Heart right ventricle (tissue), 16 donors: ENCODE measurements at regions of chr19 and their contacts with region 1.

Region 1: GRCh38 chr19:3429581-3430080 is 50.7 kb downstream of the SMIM24 start:
- DNase-seq: peak; percentile 90
- ATAC-seq: peak; percentile 63 to 89 (median 82)
- H3K4me3 ChIP-seq: peak overlapping the region in 1 of 10 donors; percentile 23
- H3K27ac ChIP-seq: peak overlapping the region; percentile 66 to 93 (median 82)
- H3K4me1 ChIP-seq: peaks cover 10 to 67% (median 36%) of the 10 kb centered on the region in 9 donors
- H3K27me3 ChIP-seq: no peaks in the 10 kb centered on the region
- CTCF ChIP-seq: peak; percentile 99 to 100 (median 99)

Region 2: GRCh38 chr19:3343619-3344502 is 85.8 kb before region 1 on chr19:
- intact Hi-C with region 1: loop called in 4 of 10 experiments (anchors 5 kb)
- DNase-seq: peak; percentile 76 to 77
- ATAC-seq: peak; percentile 69 to 86 (median 79)
- H3K4me3 ChIP-seq: peak overlapping the region in 7 of 10 donors; percentile 17 to 41 (median 35)
- H3K27ac ChIP-seq: peak overlapping the region; percentile 52 to 82 (median 70)
- H3K4me1 ChIP-seq: peaks cover 11 to 33% (median 27%) of the 10 kb centered on the region in 9 donors
- H3K27me3 ChIP-seq: no peaks in the 10 kb centered on the region
- CTCF ChIP-seq: peak in 5 of 9 donors; percentile 2 to 36 (median 10)

Region 3: DNA sequence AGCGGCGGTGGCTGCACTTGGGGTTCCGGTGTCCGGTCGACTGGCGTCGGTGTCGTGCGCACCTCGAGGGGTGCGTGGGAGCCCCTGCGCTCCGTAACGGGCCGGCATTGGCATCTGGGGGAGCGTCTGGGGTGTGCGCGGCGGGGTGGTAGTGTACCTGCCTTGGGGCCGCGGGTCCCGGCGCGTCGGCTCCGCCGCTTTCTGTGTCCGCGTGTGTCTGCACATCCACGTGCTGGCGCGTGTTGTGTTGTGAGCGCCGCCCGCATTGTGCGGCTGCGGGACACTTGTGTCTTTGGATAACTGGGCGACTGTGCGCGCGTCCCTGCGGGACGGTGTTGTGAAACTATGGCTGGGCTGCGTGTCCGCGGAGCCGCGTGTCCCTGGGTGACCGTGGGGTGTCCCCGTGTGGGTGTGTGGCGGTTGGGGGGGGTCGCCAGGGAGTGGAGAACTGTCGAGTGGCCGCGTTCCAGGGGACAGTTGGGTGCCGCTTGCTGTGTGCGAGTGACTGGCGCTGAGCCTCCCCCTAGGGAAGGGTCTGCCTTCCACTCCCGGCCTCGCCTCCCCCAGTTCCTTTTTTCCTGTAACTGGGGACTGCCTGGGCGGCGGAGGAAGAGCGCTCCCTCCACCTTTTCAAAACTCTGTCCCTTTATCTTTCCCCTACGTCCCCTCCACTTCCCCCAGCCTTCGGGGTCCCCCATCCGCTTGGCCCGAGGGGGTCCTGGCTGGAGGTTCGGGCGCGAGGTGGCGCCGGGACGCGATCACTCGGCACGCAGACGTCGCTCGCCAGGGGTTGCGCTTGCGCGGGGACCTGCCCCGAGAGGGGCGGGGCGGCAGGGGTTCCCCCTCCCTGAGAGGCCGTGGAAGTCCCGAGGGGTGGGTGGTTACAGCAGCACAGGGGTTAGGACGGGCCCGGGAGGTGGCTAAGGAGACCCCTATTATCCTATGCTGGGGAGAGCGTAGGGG is 68.9 kb before region 1 on chr19:
- intact Hi-C with region 1: loop called in 2 of 10 experiments (anchors 5 to 10 kb)
- DNase-seq: peak; percentile 81 to 84
- ATAC-seq: peak; percentile 56 to 82 (median 72)
- H3K4me3 ChIP-seq: peak overlapping the region; percentile 40 to 100 (median 82)
- H3K27ac ChIP-seq: peak overlapping the region; percentile 88 to 100 (median 96)
- H3K4me1 ChIP-seq: peaks cover 17 to 60% (median 43%) of the 10 kb centered on the region in 9 donors
- H3K27me3 ChIP-seq: peaks cover 0 to 10% (median 0%) of the 10 kb centered on the region in 7 donors
- CTCF ChIP-seq: peak in 5 of 9 donors; percentile 22 to 55 (median 48)

Region 4: DNA sequence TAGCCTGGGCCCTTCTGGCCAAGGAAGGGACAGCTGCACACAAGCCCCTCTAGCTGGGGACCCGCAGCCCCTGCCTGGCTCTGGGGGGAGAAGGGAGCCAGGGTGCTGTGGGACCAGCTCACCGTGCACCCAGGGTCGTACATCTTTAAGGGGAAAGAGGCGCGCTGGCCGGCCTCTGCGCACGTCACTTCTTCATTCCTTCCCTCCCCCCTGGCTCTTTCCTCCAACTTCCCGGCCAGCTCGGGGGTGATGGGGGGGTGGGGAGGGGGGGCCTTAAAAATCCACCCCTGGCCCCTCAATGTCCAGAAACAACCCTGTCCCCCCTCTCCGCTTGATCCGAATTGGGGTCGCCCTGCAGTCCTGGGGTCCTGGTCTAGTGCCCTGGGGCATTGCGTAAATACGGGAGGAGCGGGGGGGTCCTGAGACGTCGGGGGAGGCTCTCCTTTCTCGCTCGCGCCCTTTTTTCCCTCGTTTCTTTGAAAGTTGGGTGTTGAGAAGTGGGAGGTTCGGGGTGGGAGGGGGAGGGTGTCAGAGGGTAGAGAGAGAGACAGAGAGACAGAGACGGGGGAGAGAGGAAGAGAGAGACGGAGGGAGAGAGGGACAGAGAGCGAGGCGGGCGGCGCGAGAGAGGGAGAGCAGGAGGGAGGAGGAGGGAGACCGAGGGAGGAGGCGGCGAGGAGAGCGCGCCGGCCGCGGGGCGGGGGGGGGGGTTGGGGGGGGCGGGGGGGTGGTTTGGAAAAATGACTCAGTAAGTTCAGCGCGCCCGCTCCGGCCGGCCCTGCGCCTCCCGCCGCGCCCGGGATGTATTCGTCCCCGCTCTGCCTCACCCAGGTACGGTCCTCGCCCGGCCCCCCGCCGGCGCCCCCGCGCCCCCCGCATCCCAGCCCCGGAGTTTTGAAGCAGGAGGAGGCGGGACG is 63.5 kb before region 1 on chr19 and contains the start of gene NFIC:
- intact Hi-C with region 1: loop called in 4 of 10 experiments (anchors 2 to 5 kb)
- DNase-seq: peak; percentile 83 to 84
- ATAC-seq: peak; percentile 66 to 77 (median 71)
- H3K4me3 ChIP-seq: peak within 1 kb of the TSS; percentile 78 to 95 (median 84)
- H3K27ac ChIP-seq: peak within 1 kb of the TSS; percentile 94 to 100 (median 98)
- H3K4me1 ChIP-seq: peaks cover 25 to 80% (median 66%) of the 10 kb centered on the region in 9 donors
- H3K27me3 ChIP-seq: no peaks in the 10 kb centered on the region
- CTCF ChIP-seq: no peak
- total RNA-seq, gene NFIC: 132 to 217 (median 161) TPM